Posterior vena cava (tissue), 2 donors: ENCODE measurements at regions of chr1 and their contacts with region 1.

Region 1: DNA sequence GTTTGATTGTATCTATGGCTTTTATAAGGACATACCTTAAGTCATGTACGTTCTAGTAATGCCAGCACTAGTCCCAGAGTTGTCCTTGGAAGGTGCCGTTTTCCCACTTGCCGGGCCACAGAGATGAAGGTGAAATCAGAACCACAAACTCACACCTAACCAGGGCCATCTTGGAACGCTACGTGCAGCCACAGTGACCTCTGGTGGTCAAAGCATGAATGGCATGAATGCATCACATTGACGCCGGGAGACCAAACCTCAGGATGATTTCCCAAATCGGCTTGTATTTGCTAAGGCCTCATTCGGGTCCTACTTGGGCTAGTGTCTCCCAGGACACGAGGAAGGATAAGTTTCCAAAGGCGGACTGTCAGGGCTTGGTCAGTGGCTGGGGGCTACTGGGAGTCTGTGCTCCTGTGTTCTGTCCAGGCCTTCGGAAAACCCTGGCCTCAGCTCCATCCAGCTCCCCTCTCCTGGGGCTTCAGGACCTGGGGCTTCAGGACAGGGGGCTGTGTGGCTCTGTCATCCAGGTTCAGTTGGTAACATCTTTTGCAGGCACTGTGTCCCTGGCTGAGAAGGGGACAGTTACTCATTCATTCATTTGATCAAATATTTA is 260.5 kb downstream of the PRDM2 start:
- DNase-seq: peak; percentile 85

Region 2: DNA sequence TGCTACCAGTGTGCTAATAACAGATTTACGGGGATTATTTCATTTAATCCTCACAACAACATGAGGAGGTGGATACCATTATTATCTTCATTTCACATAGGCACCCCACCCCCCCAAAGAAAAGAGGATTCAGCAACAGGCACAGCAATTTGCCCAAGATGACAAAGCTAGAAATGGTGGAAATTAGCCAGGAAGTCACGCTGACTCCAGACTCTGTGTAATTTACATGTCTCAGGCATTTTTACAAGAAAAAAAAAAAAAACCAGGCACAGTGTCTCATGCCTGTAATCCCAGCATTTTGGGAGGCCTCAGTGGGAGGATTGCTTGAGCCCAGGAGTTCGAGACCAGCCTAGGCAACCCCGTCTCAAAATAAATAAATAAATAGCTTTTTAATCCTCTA is 298.0 kb before region 1 on chr1:
- intact Hi-C with region 1: loop called (anchors 2 to 5 kb)
- DNase-seq: no peak

Region 3: GRCh38 chr1:13748610-13749505 is 211.6 kb before region 1 on chr1:
- intact Hi-C with region 1: loop called in 1 of 2 experiments (anchors 5 kb)
- DNase-seq: peak; percentile 99

Region 4: GRCh38 chr1:13828454-13829151 is 131.9 kb before region 1 on chr1:
- intact Hi-C with region 1: loop called (anchors 10 kb)
- DNase-seq: no peak

Region 5: DNA sequence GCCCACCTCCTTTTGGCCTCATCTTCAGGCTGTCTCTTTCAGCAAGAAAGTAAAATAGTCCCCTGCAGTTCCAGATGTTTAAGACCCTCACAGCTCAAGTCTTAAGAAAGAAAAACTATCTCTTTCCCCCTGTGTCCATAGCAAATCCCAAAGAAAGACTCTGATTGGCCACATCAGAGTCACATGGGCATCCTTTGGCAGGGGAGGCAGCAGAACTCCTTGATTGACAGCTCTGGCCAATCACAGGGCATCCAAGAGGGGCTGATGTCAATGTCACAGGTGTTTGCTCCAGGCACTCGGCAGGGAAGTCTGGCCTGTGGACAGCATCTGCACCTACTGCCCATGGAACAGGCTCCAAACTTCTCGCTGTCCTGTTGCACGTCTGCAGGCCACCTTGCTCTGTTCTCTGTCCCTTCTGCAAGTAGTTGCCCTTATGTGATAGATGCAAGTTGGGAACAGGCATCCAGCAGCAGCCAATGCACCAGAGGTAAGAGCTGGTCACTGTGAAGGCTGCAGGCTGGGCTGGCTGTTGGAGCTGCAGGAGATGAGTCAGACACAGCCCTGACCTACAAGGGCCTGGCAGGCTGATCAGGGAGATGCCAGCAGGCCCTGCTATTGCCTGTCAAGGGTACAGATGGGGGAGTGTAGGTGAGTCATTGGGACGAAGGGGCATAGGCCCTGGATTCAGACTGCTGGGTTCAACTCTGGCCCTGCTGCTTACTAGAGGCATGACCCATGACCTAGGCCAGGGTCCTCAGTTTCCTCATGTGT is 1096.2 kb after region 1 on chr1:
- intact Hi-C with region 1: loop called in 1 of 2 experiments (anchors 10 kb)
- DNase-seq: no peak